SK-N-SH (cell line): ENCODE measurements at regions of chr17 and their contacts with region 1.

Region 1: DNA sequence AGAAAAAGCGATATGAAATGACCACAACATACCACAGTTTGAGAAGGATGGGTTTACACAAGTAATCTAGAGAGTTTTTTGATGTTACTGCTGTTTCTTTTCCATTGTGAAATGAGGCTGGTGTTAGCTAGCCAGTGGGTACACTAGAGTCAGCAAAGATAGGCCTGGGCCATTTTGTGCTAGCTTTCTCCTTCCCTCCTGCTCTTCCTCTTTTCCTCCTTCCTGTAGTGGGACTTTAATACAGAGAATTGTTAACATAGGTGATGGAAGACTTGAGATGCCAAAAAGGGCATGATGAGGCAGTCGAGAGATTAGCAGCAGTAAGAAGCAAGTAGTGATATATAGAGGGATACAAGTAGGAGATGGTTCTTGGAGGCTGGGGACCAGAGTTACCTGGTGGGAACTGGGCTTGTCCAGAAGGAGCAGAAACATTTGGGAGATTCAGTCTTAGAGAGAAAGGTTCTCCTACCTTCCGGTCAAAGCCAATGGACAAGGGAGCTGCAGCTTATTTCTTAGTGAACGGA is 7.7 kb downstream of the NSRP1 start:
- DNase-seq: no peak
- H3K4me3 ChIP-seq: no peak overlapping the region
- H3K27ac ChIP-seq: no peak overlapping the region; a peak in 1 of 4 replicates
- H3K4me1 ChIP-seq: peaks cover 0 to 3% of the 10 kb centered on the region in 2 experiments; a peak in 2 of 4 replicates
- H3K27me3 ChIP-seq: no peaks in the 10 kb centered on the region
- CTCF ChIP-seq: no peak
- EP300 ChIP-seq: no peak
- RAD21 ChIP-seq: no peak

Region 2: DNA sequence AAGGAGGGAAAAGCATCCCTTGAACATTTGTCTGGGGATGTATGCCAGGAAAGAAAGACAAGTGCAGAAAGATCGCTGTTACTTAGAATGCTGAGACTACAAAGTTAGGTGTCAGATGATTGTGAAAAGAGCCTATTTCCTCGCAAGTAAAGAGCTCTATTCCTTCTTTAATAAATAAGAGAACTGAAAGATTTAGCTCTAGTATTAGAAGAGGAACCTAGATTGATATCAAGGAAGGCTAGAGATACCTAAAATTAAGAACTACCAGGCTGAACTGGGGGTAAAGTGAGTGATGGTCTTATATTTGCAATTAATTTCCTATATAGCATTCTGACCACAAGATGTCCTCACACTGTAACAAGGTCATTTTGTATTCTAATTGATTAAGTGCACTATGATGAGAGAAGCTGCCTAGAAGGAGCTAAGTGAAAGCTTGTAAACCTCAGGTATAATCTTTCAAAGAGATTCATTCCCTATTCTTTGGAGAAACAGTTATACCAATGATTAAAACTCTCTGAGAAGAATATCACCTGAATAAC is 256.6 kb before region 1 on chr17:
- CTCF ChIA-PET with region 1: no interaction called
- POLR2A ChIA-PET with region 1: no interaction called
- DNase-seq: no peak
- H3K4me3 ChIP-seq: no peak overlapping the region
- H3K27ac ChIP-seq: no peak overlapping the region
- H3K4me1 ChIP-seq: peaks cover 5 to 8% of the 10 kb centered on the region in 2 experiments; a peak in 3 of 4 replicates
- H3K27me3 ChIP-seq: no peaks in the 10 kb centered on the region
- CTCF ChIP-seq: peak; percentile 50
- EP300 ChIP-seq: no peak
- RAD21 ChIP-seq: peak; percentile 54

Region 3: DNA sequence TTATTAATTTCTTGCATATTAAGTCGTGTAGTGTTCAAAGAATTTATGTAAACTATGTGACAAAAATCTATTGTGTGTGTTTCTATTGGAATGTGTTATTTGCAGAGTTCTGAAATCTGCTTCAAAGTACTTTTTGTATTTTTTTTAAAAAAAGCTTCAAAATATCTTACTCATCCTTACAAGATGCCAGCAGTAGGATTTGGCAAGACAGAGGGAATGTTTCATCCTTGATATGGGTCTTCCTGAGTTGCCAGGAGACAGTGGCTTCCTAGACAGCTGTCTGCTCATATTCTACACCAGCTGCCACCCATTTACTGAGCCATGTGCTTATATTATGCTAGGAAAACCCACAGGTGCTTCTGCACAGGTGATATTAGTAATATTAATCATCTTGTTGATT is 146.5 kb before region 1 on chr17:
- CTCF ChIA-PET with region 1: no interaction called
- POLR2A ChIA-PET with region 1: no interaction called
- DNase-seq: no peak
- H3K4me3 ChIP-seq: no peak overlapping the region
- H3K27ac ChIP-seq: no peak overlapping the region
- H3K4me1 ChIP-seq: no peaks in the 10 kb centered on the region
- H3K27me3 ChIP-seq: no peaks in the 10 kb centered on the region
- CTCF ChIP-seq: no peak
- EP300 ChIP-seq: no peak
- RAD21 ChIP-seq: no peak

Region 4: DNA sequence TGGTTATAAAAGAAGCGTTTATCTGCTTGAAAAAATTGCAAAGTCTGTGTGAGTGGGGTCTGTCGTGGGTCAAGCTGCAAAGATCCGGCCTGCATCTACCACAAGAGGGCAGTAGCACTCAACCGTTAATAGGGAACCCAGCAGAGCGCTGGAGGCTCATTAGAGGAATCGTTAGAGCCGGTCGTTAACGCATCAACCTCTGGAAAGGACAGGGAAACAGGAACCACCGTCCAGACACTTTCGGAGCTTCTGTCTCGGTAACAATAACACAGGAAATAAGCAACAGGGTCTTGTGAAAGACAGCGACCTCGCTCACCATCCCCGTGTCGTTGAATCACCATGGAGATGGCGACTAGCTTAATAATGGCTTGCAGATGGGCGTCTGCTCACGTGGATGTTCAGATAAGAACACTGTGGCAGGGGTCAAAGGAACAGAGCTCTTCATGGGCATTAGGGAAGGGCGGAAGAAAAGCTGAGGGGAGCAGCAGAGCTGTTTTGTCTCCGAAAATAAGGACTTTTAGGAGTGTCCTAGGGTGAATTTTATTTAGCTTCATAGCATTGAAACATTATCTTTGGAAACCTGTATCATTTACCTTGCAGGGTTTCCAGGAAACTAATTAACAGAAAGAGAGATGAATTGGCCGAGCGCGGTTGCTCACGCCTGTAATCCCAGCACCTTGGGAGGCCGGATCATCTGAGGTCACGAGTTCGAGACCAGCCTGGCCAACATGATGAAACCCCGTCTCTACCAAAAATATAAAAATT is 19.6 kb before region 1 on chr17:
- CTCF ChIA-PET with region 1: interaction called, 68 read pairs
- POLR2A ChIA-PET with region 1: no interaction called
- DNase-seq: peak; percentile 79
- H3K4me3 ChIP-seq: peak overlapping the region; percentile 55 to 62
- H3K27ac ChIP-seq: peak overlapping the region; percentile 17 to 95; a peak in 3 of 4 replicates
- H3K4me1 ChIP-seq: peaks cover 0 to 2% of the 10 kb centered on the region in 2 experiments; a peak in 1 of 4 replicates
- H3K27me3 ChIP-seq: no peaks in the 10 kb centered on the region
- CTCF ChIP-seq: peak; percentile 98
- EP300 ChIP-seq: peak in 1 of 2 experiments; percentile 49; a peak in 2 of 4 replicates
- RAD21 ChIP-seq: peak; percentile 90

Region 5: GRCh38 chr17:30148376-30148775 is 24.0 kb after region 1 on chr17:
- CTCF ChIA-PET with region 1: interaction called, 31 read pairs
- POLR2A ChIA-PET with region 1: interaction called, 3 read pairs
- DNase-seq: no peak
- H3K4me3 ChIP-seq: no peak overlapping the region
- H3K27ac ChIP-seq: no peak overlapping the region
- H3K4me1 ChIP-seq: no peaks in the 10 kb centered on the region
- H3K27me3 ChIP-seq: no peaks in the 10 kb centered on the region
- CTCF ChIP-seq: no peak
- EP300 ChIP-seq: no peak
- RAD21 ChIP-seq: no peak

Region 6: DNA sequence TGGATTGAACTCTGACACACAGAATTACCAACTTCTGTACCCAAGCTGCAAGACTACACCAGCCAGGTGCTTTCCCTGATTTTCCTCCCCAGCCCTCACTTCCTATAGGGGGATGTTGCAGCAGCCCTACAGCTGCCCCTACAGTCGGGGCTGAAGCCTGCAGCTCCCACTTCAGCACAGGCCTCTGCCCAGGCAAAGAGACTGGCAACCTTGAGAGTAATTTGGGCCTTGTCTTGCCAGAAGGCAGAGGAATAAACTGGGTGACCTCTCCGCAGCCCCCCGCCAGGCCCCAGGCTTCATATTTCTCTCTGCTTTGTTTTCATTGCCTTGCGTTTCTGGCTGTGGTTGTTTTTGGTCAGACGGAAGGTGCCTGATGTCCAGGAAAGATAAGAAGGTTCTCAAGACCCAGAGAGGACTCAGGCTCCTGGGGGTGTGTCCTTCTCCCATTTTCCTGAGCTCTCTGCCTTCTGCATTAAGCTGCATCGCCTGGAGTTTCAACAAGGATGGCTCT is 79.2 kb after region 1 on chr17:
- CTCF ChIA-PET with region 1: interaction called, 13 read pairs
- POLR2A ChIA-PET with region 1: no interaction called
- DNase-seq: peak; percentile 1
- H3K4me3 ChIP-seq: no peak overlapping the region
- H3K27ac ChIP-seq: no peak overlapping the region
- H3K4me1 ChIP-seq: peaks cover 0 to 4% of the 10 kb centered on the region in 2 experiments; a peak in 1 of 4 replicates
- H3K27me3 ChIP-seq: no peaks in the 10 kb centered on the region
- CTCF ChIP-seq: no peak
- EP300 ChIP-seq: no peak
- RAD21 ChIP-seq: no peak

Region 7: DNA sequence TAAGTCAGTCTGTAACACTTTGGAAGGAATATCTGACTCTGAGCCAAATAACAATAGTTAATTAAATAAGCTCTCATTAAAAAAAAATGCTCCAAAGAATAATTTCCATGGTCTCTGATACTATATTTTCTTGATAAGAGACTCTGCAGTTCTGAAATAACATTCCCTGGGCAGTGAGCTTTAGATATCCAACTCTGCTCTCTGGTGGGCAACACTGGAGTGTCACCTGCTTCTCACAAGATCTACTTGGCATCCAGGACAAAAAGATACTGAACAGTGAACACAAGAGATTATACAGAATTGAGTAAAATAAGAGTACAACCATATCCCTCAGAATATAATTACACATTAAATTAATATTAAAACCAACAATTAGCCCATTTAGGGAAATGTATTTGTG is 153.7 kb after region 1 on chr17:
- CTCF ChIA-PET with region 1: interaction called, 70 read pairs
- POLR2A ChIA-PET with region 1: interaction called, 3 read pairs
- DNase-seq: peak; percentile 45
- H3K4me3 ChIP-seq: no peak overlapping the region
- H3K27ac ChIP-seq: no peak overlapping the region
- H3K4me1 ChIP-seq: no peaks in the 10 kb centered on the region
- H3K27me3 ChIP-seq: no peaks in the 10 kb centered on the region
- CTCF ChIP-seq: peak; percentile 64
- EP300 ChIP-seq: no peak
- RAD21 ChIP-seq: peak; percentile 84

Region 8: DNA sequence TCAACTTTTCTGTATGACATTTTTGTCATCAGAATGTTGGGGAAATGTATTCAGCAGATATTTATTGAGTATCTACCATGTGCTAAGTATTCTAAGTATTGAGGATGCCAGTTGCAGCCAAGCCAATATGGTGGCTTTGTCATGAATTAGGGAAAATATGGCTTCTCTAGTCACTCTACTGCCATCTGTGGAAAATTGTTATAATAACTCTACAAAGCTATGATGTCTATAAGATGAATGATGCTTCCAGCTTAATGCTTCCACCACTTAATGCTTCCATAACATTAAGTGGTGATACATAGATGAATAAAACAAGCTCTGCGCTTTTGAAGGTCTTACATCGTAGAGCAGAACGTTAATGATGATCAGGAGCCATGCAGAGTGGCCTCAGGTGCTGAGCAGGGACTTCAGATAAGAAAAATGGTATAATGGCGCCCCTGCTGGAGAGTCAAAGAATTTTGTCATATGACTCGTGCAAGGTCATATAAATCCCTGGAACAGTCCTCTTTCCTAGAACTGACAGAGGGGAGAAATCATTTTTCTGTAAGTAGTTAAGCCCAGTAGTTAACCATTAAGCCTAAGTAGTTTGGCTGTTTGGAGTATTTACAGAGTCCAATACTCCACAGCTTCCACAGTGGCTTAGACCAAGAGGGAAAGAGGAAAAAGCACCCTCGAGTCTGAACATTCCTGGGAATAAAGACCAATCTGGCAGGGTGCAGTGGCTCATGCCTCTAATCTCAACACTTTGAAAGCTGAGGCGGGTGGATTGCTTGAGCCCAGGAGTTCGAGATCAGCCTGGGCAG is 212.2 kb after region 1 on chr17:
- CTCF ChIA-PET with region 1: interaction called, 19 read pairs
- POLR2A ChIA-PET with region 1: no interaction called
- DNase-seq: peak; percentile 43
- H3K4me3 ChIP-seq: no peak overlapping the region
- H3K27ac ChIP-seq: no peak overlapping the region
- H3K4me1 ChIP-seq: peaks cover 7 to 16% of the 10 kb centered on the region in 2 experiments; a peak in 2 of 4 replicates
- H3K27me3 ChIP-seq: no peaks in the 10 kb centered on the region
- CTCF ChIP-seq: peak; percentile 86
- EP300 ChIP-seq: no peak
- RAD21 ChIP-seq: peak; percentile 67